A549 (cell line): ENCODE measurements at regions of chr22 and their contacts with region 1.

Region 1: GRCh38 chr22:32985899-32986765 is 72.0 kb downstream of the SYN3 start:
- DNase-seq: peak; percentile 40 to 61
- ATAC-seq: peak; percentile 93 to 96
- H3K4me3 ChIP-seq: no peak overlapping the region
- H3K27ac ChIP-seq: no peak overlapping the region
- H3K4me1 ChIP-seq: no peaks in the 10 kb centered on the region
- CTCF ChIP-seq: peak; percentile 55
- EP300 ChIP-seq: no peak
- POLR2A ChIP-seq: no peak
- RAD21 ChIP-seq: peak; percentile 60 to 65

Region 2: GRCh38 chr22:32932176-32932575 is 54.0 kb before region 1 on chr22:
- CTCF ChIA-PET with region 1: no interaction called
- POLR2A ChIA-PET with region 1: no interaction called
- DNase-seq: no peak
- ATAC-seq: no peak
- H3K4me3 ChIP-seq: no peak overlapping the region
- H3K27ac ChIP-seq: no peak overlapping the region
- H3K4me1 ChIP-seq: no peaks in the 10 kb centered on the region
- CTCF ChIP-seq: no peak
- EP300 ChIP-seq: no peak
- POLR2A ChIP-seq: no peak
- RAD21 ChIP-seq: no peak

Region 3: DNA sequence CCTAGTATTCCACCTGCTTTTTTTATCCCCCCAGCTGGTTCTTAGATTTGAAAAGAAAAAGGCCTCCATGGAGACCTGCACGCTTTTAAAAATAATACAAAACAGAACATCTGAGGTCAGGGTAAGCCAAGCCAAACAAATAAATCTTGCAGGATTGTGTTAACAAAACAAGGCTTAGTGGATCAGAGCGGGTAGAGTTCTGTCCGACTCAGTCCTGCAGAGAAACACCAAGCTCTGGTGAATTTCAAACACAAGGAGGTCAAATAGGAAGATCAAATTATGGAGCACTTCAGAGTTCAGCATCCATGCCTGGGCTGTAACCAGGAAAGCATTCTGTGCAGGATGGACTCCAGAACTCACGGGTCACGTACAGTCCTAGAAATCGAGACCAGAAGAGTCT is 14.9 kb before region 1 on chr22:
- CTCF ChIA-PET with region 1: interaction called, 12 read pairs
- POLR2A ChIA-PET with region 1: no interaction called
- DNase-seq: no peak
- ATAC-seq: no peak
- H3K4me3 ChIP-seq: no peak overlapping the region
- H3K27ac ChIP-seq: no peak overlapping the region
- H3K4me1 ChIP-seq: no peaks in the 10 kb centered on the region
- CTCF ChIP-seq: no peak
- EP300 ChIP-seq: no peak
- POLR2A ChIP-seq: no peak
- RAD21 ChIP-seq: no peak